Ascending aorta (tissue), 2 donors: ENCODE measurements at regions of chr5 and their contacts with region 1.

Region 1: DNA sequence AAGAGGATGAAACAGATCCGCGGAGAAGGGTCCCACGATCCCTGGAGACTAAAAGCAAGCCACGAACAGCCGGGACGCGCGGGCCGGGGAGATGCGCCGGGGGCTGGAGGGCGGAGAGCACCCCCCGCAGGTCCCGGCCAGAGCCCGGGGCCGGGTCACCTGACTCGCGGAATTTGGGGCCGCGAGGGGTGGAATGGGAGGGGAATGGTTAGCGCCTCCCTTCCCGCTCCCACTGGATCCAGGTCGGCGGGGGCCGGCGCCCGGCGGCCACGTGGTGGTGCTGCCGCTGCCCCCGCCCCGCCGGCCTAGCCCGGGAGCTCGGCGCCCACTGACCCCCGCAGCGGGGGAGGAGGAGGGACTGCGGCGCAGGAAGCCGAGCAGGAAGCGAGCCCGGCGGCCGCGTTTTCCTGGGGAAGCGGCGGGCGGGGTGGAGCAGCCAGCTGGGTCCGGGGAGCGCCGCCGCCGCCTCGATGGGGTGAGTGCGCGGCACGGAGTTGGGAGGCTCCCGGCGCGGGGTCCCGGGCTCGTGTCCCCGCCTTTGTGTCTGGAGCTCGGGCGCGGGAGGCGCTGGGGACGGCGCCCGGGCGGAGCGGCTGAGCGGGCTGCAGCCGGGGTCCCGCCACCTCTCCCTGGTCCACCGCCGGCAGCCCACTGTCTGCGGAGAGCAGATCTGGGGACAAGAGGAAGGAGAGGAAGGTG is at the start of gene RAI14:
- DNase-seq: peak; percentile 40 to 93
- H3K4me3 ChIP-seq: peak within 1 kb of the TSS; percentile 84 to 94
- H3K27ac ChIP-seq: peak within 1 kb of the TSS; percentile 96 to 99
- H3K4me1 ChIP-seq: peaks cover 8 to 23% of the 10 kb centered on the region in 2 donors
- H3K27me3 ChIP-seq: no peaks in the 10 kb centered on the region
- CTCF ChIP-seq: peak in 1 of 3 experiments; percentile 10
- total RNA-seq, gene RAI14: 134 TPM

Region 2: DNA sequence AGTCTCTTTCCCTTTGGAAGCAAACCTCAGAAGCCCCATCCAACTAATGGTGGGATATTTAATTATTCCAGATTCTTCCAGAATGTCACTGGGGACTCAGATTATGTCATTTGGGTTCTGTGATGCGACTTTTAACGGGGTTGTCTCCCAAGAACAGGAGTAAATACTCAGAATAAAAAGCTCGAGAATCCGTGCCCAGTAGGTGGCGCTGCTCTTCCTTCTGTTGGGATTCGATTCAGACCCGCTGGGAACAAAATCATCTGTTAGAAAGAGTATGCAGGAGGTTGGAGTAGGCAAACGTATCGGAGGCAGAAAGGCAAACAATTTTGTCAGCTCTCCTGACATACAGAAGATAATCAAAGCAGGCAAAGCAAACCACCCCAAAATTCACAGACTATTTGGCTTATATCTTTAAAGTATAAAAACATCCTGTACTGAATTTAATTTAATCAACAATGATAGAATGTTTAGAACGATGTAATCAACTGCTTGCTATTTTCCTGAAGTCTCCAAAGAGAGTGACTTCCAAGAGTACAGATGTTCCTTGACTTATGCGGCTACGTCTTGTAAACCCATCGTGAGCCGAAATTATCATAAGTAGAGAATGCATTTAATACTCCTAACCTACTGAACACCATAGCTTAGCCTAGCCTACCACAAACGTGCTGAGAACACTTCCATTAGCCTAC is 169.8 kb before region 1 on chr5:
- intact Hi-C with region 1: loop called (anchors 1 kb)
- DNase-seq: peak in 1 of 2 donors; percentile 94
- H3K4me3 ChIP-seq: no peak overlapping the region
- H3K27ac ChIP-seq: peak overlapping the region; percentile 87 to 89
- H3K4me1 ChIP-seq: peaks cover 9 to 37% of the 10 kb centered on the region in 2 donors
- H3K27me3 ChIP-seq: no peaks in the 10 kb centered on the region
- CTCF ChIP-seq: peak; percentile 74 to 91 (median 81)

Region 3: GRCh38 chr5:34608859-34609648 is 47.1 kb before region 1 on chr5:
- intact Hi-C with region 1: loop called (anchors 5 kb)
- DNase-seq: peak in 1 of 2 donors; percentile 70
- H3K4me3 ChIP-seq: peak overlapping the region in 1 of 2 donors; percentile 3
- H3K27ac ChIP-seq: peak overlapping the region; percentile 66 to 74
- H3K4me1 ChIP-seq: peaks cover 3 to 18% of the 10 kb centered on the region in 2 donors
- H3K27me3 ChIP-seq: no peaks in the 10 kb centered on the region
- CTCF ChIP-seq: no peak

Region 4: GRCh38 chr5:34686762-34687268 is 30.7 kb after region 1 on chr5:
- intact Hi-C with region 1: loop called (anchors 1 kb)
- DNase-seq: peak; percentile 22 to 93
- H3K4me3 ChIP-seq: peak overlapping the region in 1 of 2 donors; percentile 14
- H3K27ac ChIP-seq: peak overlapping the region; percentile 62 to 73
- H3K4me1 ChIP-seq: peaks cover 5 to 69% of the 10 kb centered on the region in 2 donors
- H3K27me3 ChIP-seq: no peaks in the 10 kb centered on the region
- CTCF ChIP-seq: no peak

Region 5: GRCh38 chr5:34838785-34839714 is 182.9 kb after region 1 on chr5 and contains the start of gene TTC23L:
- intact Hi-C with region 1: loop called (anchors 2 kb)
- DNase-seq: peak; percentile 56 to 93
- H3K4me3 ChIP-seq: peak within 1 kb of the TSS; percentile 76 to 83
- H3K27ac ChIP-seq: peak within 1 kb of the TSS; percentile 63 to 70
- H3K4me1 ChIP-seq: peaks cover 0 to 3% of the 10 kb centered on the region in 2 donors
- H3K27me3 ChIP-seq: no peaks in the 10 kb centered on the region
- CTCF ChIP-seq: no peak
- total RNA-seq, gene TTC23L: not detected

Region 6: GRCh38 chr5:34915139-34915855 is 259.1 kb after region 1 on chr5 and contains the starts of genes BRIX1 and RAD1:
- intact Hi-C with region 1: loop called (anchors 5 kb)
- DNase-seq: peak; percentile 88 to 98
- H3K4me3 ChIP-seq: peak within 1 kb of the TSS; percentile 89 to 93
- H3K27ac ChIP-seq: peak within 1 kb of the TSS; percentile 85 to 87
- H3K4me1 ChIP-seq: peaks cover 0 to 18% of the 10 kb centered on the region in 2 donors
- H3K27me3 ChIP-seq: no peaks in the 10 kb centered on the region
- CTCF ChIP-seq: peak in 1 of 3 experiments; percentile 22
- total RNA-seq, gene BRIX1: 8.5 TPM
- total RNA-seq, gene RAD1: 2.0 TPM

Region 7: GRCh38 chr5:36017004-36017403 is 1360.9 kb after region 1 on chr5:
- intact Hi-C with region 1: no loop called
- DNase-seq: no peak
- H3K4me3 ChIP-seq: no peak overlapping the region
- H3K27ac ChIP-seq: no peak overlapping the region
- H3K4me1 ChIP-seq: no peaks in the 10 kb centered on the region
- H3K27me3 ChIP-seq: no peaks in the 10 kb centered on the region
- CTCF ChIP-seq: no peak